ENCODE measurements at regions of chr14 and their contacts with region 1.

Region 1: DNA sequence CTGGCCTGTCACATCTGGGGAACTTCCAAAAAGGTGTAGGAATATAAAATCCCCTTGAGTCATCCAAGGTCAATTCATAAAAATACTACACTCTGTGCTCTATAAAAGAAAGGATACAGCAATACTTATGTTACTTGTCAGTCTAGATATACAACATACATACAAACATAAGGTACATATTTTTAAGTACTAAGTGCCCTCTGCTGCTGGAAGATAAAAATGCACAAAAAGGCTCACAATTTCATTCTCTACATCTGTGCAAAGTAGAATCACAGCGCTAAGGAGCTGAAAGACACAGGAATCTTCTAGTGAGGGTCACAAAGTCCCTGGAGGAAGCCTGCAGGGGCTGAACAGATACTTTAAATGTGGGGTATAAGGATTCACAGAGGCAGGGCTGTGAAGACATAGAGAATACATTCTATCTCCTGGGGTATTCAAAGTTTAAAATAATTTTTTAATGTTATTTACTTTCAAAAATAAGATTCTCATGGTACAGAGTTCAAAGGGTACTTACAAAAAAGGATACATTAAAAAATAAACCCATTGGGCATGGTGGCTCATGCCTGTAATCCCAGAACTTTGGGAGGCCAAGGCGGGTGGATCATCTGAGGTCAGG is 10.2 kb upstream of the GOLGA5 start:
- DNase-seq: peak; percentile 41
- ATAC-seq: peak; percentile 66
- H3K4me3 Mint-ChIP-seq: no peak overlapping the region
- H3K27ac Mint-ChIP-seq: no peak overlapping the region
- H3K4me1 Mint-ChIP-seq: peaks cover 11% of the 10 kb centered on the region
- H3K27me3 Mint-ChIP-seq: no peaks in the 10 kb centered on the region

Region 2: GRCh38 chr14:92199763-92200162 is 584.2 kb before region 1 on chr14:
- CTCF ChIA-PET with region 1: no interaction called
- POLR2A ChIA-PET with region 1: no interaction called
- intact Hi-C with region 1: no loop called
- DNase-seq: no peak
- ATAC-seq: no peak
- H3K4me3 Mint-ChIP-seq: no peak overlapping the region
- H3K27ac Mint-ChIP-seq: no peak overlapping the region
- H3K4me1 Mint-ChIP-seq: no peaks in the 10 kb centered on the region
- H3K27me3 Mint-ChIP-seq: peaks cover 2% of the 10 kb centered on the region

Region 3: GRCh38 chr14:92686900-92687444 is 97.0 kb before region 1 on chr14:
- CTCF ChIA-PET with region 1: interaction called, 8 read pairs
- POLR2A ChIA-PET with region 1: no interaction called
- intact Hi-C with region 1: loop called in 1 of 2 experiments (anchors 1 kb)
- DNase-seq: peak; percentile 84
- ATAC-seq: peak; percentile 85
- H3K4me3 Mint-ChIP-seq: no peak overlapping the region
- H3K27ac Mint-ChIP-seq: no peak overlapping the region
- H3K4me1 Mint-ChIP-seq: no peaks in the 10 kb centered on the region
- H3K27me3 Mint-ChIP-seq: no peaks in the 10 kb centered on the region

Region 4: GRCh38 chr14:92704036-92704804 is 79.7 kb before region 1 on chr14:
- CTCF ChIA-PET with region 1: interaction called, 11 read pairs
- POLR2A ChIA-PET with region 1: no interaction called
- intact Hi-C with region 1: no loop called
- DNase-seq: no peak
- ATAC-seq: no peak
- H3K4me3 Mint-ChIP-seq: no peak overlapping the region
- H3K27ac Mint-ChIP-seq: no peak overlapping the region
- H3K4me1 Mint-ChIP-seq: no peaks in the 10 kb centered on the region
- H3K27me3 Mint-ChIP-seq: no peaks in the 10 kb centered on the region

Region 5: GRCh38 chr14:92709340-92710000 is 74.5 kb before region 1 on chr14:
- CTCF ChIA-PET with region 1: interaction called, 35 read pairs
- POLR2A ChIA-PET with region 1: no interaction called
- intact Hi-C with region 1: loop called (anchors 1 kb)
- DNase-seq: no peak
- ATAC-seq: no peak
- H3K4me3 Mint-ChIP-seq: no peak overlapping the region
- H3K27ac Mint-ChIP-seq: no peak overlapping the region
- H3K4me1 Mint-ChIP-seq: no peaks in the 10 kb centered on the region
- H3K27me3 Mint-ChIP-seq: no peaks in the 10 kb centered on the region

Region 6: DNA sequence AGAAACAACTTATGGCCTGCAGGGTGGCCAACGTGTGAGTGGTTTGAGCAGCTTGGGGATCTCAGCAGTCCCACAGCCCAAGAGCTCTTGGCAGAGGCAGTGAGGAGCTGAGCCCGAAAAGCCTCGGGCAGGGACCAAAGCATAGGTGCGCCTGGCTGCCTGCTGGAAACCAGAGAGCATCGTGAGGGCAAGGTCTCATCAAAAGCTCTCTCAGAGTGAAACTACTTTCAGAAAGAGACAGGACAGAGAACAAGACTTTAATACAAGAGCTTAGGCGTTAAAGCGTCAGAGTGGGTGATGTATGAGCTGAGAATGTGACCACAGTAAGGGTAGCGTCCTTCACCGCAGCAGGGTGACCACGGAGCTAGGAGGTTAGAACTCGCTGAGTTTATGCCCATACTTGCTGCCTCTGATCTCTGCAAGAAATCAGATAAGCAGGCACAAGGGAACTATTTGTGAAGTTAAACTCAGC is 66.3 kb before region 1 on chr14:
- CTCF ChIA-PET with region 1: interaction called, 35 read pairs
- POLR2A ChIA-PET with region 1: no interaction called
- intact Hi-C with region 1: loop called (anchors 1 kb)
- DNase-seq: peak; percentile 18
- ATAC-seq: peak; percentile 68
- H3K4me3 Mint-ChIP-seq: no peak overlapping the region
- H3K27ac Mint-ChIP-seq: no peak overlapping the region
- H3K4me1 Mint-ChIP-seq: peaks cover 4% of the 10 kb centered on the region
- H3K27me3 Mint-ChIP-seq: no peaks in the 10 kb centered on the region

Measured in activated CD4-positive, alpha-beta T cell treated with anti-CD3 and anti-CD28 coated beads for 36 hours (primary cell).